OCI-LY7 (cell line): ENCODE measurements at regions of chrX and their contacts with region 1.

Region 1: DNA sequence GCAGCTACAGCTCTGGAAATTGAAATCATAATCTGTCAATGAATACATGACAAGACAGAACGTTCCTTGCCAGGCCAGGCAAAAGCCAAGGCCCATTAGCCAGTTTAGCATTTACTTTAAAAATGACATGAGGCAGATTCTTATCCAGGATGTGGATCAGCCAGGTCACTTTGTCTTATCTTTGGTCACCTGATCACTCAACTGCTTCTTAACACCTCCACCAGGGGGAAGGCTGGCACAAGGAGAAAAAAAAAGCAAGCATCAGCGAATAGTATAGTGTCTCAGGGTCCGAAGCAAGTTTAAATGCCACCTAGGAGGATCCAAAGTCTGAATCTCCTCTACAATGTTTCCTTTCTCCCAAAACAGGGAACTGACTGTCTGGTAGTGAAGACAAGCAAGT is 18.8 kb downstream of the ATP1B4 start:
- DNase-seq: peak; percentile 74
- H3K4me3 ChIP-seq: no peak overlapping the region
- H3K27ac ChIP-seq: no peak overlapping the region
- H3K4me1 ChIP-seq: peaks cover 4% of the 10 kb centered on the region
- CTCF ChIP-seq: peak; percentile 77

Region 2: DNA sequence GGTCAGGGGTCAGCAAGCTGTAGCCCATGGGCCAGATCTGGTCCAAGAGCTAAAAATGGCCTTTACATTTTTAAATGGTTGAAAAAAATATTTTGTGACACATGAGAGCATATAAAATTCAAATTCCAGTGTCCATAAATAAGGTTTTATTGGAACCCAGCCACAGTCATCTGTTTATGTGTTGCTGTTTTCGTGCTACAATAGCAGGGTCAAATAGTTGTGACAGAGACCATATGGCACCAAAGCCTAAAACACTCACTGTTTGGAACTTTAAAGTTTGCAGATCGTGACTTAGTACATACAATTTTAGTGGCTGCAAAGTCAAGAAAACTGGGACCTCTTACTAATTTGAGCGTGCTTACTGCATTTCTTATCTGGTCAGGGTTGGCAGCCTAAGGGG is 59.2 kb after region 1 on chrX:
- CTCF ChIA-PET with region 1: no interaction called
- POLR2A ChIA-PET with region 1: no interaction called
- intact Hi-C with region 1: no loop called
- DNase-seq: no peak
- H3K4me3 ChIP-seq: no peak overlapping the region
- H3K27ac ChIP-seq: no peak overlapping the region
- H3K4me1 ChIP-seq: no peaks in the 10 kb centered on the region
- CTCF ChIP-seq: no peak

Region 3: DNA sequence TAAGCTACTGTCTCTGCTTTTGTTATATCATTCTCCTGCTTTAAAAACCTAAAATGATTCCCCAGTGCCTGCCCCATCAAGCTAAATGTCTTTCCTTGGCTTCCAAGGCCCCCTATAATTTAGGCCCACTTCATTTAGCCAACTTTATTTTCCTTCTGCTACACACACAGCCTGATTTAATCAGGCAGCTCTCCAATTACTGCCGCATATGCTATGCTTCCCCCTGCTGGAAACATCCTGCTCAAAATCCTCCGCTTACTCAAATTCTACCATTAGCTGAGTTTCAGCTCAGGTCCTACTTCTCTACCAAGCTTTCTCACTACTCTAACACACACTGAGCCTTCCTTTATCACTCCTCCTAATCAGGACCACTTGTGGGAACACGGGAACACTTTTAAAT is 71.4 kb after region 1 on chrX:
- CTCF ChIA-PET with region 1: interaction called, 3 read pairs
- POLR2A ChIA-PET with region 1: interaction called, 4 read pairs
- intact Hi-C with region 1: loop called (anchors 5 kb)
- DNase-seq: peak; percentile 49
- H3K4me3 ChIP-seq: no peak overlapping the region
- H3K27ac ChIP-seq: peak overlapping the region; percentile 21
- H3K4me1 ChIP-seq: peaks cover 24% of the 10 kb centered on the region
- CTCF ChIP-seq: peak; percentile 66

Region 4: GRCh38 chrX:120477453-120477852 is 96.8 kb after region 1 on chrX:
- CTCF ChIA-PET with region 1: no interaction called
- POLR2A ChIA-PET with region 1: interaction called, 4 read pairs
- intact Hi-C with region 1: loop called (anchors 1 kb)
- DNase-seq: no peak
- H3K4me3 ChIP-seq: no peak overlapping the region
- H3K27ac ChIP-seq: no peak overlapping the region
- H3K4me1 ChIP-seq: no peaks in the 10 kb centered on the region
- CTCF ChIP-seq: no peak

Region 5: GRCh38 chrX:120614816-120615215 is 234.1 kb after region 1 on chrX:
- CTCF ChIA-PET with region 1: no interaction called
- POLR2A ChIA-PET with region 1: no interaction called
- intact Hi-C with region 1: no loop called
- DNase-seq: no peak
- H3K4me3 ChIP-seq: no peak overlapping the region
- H3K27ac ChIP-seq: no peak overlapping the region
- H3K4me1 ChIP-seq: peaks cover 6% of the 10 kb centered on the region
- CTCF ChIP-seq: no peak